GM10248 (cell line): ENCODE measurements at regions of chr5 and their contacts with region 1.

Region 1: GRCh38 chr5:165282491-165282890 is 1777.1 kb downstream of the MAT2B start:
- DNase-seq: no peak
- CTCF ChIP-seq: no peak

Region 2: DNA sequence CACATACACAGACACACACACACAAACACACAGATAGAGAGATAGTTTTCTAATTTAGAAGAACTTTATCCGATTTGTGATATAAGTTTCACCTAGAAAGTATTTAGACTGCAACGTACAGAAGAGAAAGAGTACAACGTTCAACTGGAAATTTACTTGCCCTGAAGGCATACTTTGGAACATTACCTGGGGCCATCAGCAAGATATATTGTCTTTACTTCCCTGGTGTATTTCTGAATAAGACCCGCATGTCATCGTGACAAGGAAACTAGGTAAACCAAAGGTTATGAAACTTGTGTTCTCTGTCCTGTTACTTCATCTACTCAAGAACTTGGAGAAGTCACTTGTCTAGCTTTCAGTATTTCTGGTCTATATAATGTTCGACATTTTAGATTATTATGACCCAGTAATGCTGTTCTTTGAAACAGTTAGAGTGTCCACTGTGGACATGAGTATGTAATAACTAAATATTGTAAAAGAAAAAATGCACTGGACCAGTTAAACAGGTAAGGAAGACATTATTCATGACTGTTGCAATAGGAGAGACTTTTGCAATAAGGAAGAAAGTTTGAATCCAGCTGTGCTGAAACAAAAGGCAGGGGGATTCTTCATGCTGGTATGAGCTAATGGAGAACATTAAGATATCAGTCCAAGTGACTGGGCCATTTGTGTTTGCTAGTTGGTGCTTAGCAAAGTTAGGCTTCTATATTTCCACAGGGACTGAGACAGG is 14.1 kb after region 1 on chr5:
- CTCF ChIA-PET with region 1: interaction called, 10 read pairs
- POLR2A ChIA-PET with region 1: no interaction called
- DNase-seq: no peak
- CTCF ChIP-seq: no peak